H1 (cell line): ENCODE measurements at regions of chr16 and their contacts with region 1.

Region 1: GRCh38 chr16:8878521-8878911 is 3.6 kb upstream of the LITAFD start:
- DNase-seq: no peak
- H3K4me3 ChIP-seq: no peak overlapping the region
- H3K27ac ChIP-seq: no peak overlapping the region
- H3K4me1 ChIP-seq: peaks cover 3 to 9% (median 8%) of the 10 kb centered on the region in 4 experiments
- H3K27me3 ChIP-seq: no peaks in the 10 kb centered on the region
- CTCF ChIP-seq: no peak
- EP300 ChIP-seq: no peak
- POLR2A ChIP-seq: no peak
- RAD21 ChIP-seq: no peak

Region 2: DNA sequence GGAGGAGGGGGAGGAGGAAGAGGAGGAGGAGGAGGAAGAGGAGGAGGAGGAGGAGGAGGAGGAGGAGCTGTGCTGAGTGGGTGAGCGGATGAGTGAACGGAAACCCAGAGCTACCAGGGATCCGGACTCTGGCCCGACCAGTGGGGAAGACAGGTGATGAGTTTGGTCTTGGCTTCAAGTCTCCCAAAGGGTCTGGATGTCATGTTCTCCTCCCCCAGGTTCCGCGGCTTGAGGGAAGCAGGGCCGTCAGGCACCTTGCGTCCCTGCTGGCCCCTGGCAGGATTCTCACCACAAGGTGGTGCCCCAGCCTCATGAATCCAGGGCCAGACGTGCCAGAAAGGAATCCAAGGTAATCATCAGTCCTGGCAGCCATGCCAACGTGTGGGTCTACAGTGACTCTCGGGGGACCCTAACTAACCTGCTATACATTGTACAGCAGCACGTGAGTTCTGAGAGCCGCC is 217.6 kb before region 1 on chr16:
- CTCF ChIA-PET with region 1: interaction called, 14 read pairs
- POLR2A ChIA-PET with region 1: interaction called, 4 read pairs
- DNase-seq: peak; percentile 67 to 87
- H3K4me3 ChIP-seq: no peak overlapping the region
- H3K27ac ChIP-seq: no peak overlapping the region
- H3K4me1 ChIP-seq: peaks cover 0 to 3% (median 0%) of the 10 kb centered on the region in 4 experiments; a peak in 2 of 7 replicates
- H3K27me3 ChIP-seq: no peaks in the 10 kb centered on the region
- CTCF ChIP-seq: peak; percentile 94 to 96 (median 95)
- EP300 ChIP-seq: no peak
- POLR2A ChIP-seq: no peak
- RAD21 ChIP-seq: peak; percentile 99 to 100

Region 3: GRCh38 chr16:8720080-8720966 is 158.2 kb before region 1 on chr16:
- CTCF ChIA-PET with region 1: no interaction called
- POLR2A ChIA-PET with region 1: no interaction called
- DNase-seq: peak in 1 of 2 experiments; percentile 59
- H3K4me3 ChIP-seq: no peak overlapping the region
- H3K27ac ChIP-seq: no peak overlapping the region
- H3K4me1 ChIP-seq: peaks cover 0 to 16% (median 7%) of the 10 kb centered on the region in 4 experiments; a peak in 6 of 7 replicates
- H3K27me3 ChIP-seq: no peaks in the 10 kb centered on the region
- CTCF ChIP-seq: no peak
- EP300 ChIP-seq: no peak
- POLR2A ChIP-seq: no peak
- RAD21 ChIP-seq: no peak

Region 4: DNA sequence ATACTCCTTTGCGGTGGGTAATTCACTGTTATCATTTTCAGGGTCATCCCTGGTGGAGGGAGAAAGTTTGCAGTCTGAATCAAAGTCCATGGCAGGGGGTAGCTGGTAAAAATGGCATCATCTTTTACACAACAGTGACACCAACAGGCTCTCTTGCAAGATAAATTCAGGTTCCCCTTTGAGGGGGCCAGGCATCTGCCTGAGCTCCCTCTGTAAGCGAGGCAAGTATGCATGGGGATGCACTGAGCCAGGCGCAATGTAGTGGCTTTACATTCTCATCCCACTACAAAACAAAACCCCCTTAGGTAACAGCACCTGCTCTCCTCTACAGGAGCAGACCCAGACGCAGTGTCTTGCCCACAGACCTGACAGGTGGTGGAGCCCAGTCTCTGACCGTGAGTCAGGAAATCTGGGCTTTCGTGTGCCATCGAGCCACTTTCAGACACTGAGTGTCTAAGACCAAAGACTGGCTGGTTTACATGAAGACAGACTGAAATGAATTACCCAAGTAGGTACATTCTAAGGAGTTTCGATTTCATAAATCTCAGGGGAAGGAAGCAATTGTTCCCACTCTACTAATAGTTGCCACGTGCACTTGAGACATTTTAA is 21.3 kb after region 1 on chr16:
- CTCF ChIA-PET with region 1: interaction called, 14 read pairs
- POLR2A ChIA-PET with region 1: interaction called, 3 read pairs
- DNase-seq: no peak
- H3K4me3 ChIP-seq: no peak overlapping the region
- H3K27ac ChIP-seq: no peak overlapping the region
- H3K4me1 ChIP-seq: no peaks in the 10 kb centered on the region; a peak in 2 of 7 replicates
- H3K27me3 ChIP-seq: no peaks in the 10 kb centered on the region
- CTCF ChIP-seq: peak in 2 of 3 experiments; percentile 11 to 16; a peak in 3 of 4 replicates
- EP300 ChIP-seq: no peak
- POLR2A ChIP-seq: no peak
- RAD21 ChIP-seq: peak; percentile 24 to 36; a peak in 3 of 4 replicates

Region 5: DNA sequence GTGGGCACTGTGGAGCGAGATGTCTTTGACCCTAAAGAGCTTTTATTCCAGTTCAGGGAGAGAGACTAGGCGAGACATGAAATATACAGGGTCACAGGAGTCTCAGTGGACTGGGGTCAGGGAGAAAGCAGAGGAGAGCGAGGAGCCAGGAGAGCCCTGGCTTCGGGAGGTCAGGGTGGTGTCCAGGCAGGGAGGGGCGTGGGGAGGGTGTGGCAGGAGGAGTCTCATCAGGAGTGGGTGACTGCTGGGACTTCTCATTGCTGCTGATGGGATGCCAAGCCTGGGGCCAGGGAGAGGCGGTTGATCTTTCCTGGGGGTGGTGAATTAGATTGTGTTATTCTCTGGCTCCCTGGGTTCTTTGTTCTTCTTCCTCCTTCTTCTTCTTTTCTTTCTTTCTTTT is 107.6 kb after region 1 on chr16:
- CTCF ChIA-PET with region 1: no interaction called
- POLR2A ChIA-PET with region 1: no interaction called
- DNase-seq: no peak
- H3K4me3 ChIP-seq: no peak overlapping the region
- H3K27ac ChIP-seq: no peak overlapping the region
- H3K4me1 ChIP-seq: peaks cover 3 to 12% (median 5%) of the 10 kb centered on the region in 4 experiments
- H3K27me3 ChIP-seq: peaks cover 0 to 7% (median 3%) of the 10 kb centered on the region in 4 experiments; a peak in 3 of 7 replicates
- CTCF ChIP-seq: no peak
- EP300 ChIP-seq: no peak
- POLR2A ChIP-seq: no peak
- RAD21 ChIP-seq: no peak

Region 6: DNA sequence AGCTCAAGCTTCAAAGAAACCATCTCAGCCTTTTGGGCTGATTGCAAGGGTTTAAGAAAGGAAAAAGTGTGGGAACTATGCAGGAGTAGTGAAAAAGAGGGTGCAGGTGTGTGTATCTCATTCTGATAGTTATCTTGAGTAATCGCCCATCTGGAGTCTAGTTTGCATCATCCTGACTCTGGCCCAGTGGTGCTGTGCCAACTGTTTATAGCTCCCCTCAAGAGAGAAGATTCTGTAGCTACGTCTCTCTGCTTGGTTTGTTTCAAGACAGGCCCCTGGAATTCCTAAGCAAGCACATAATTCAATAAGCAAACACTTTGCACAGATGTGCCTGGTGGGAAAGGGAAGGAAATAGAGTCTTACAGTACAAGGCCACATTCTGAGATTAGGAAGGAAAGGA is 357.4 kb after region 1 on chr16:
- CTCF ChIA-PET with region 1: no interaction called
- POLR2A ChIA-PET with region 1: no interaction called
- DNase-seq: no peak
- H3K4me3 ChIP-seq: no peak overlapping the region
- H3K27ac ChIP-seq: no peak overlapping the region
- H3K4me1 ChIP-seq: peaks cover 0 to 4% (median 2%) of the 10 kb centered on the region in 4 experiments; a peak in 2 of 7 replicates
- H3K27me3 ChIP-seq: no peaks in the 10 kb centered on the region
- CTCF ChIP-seq: no peak
- EP300 ChIP-seq: no peak
- POLR2A ChIP-seq: no peak
- RAD21 ChIP-seq: no peak